Tibial artery (tissue), 4 donors: ENCODE measurements at regions of chr12 and their contacts with region 1.

Region 1: GRCh38 chr12:31659087-31659933 is at the start of gene ETFBKMT:
- DNase-seq: peak; percentile 90 to 93
- H3K4me3 ChIP-seq: peak within 1 kb of the TSS; percentile 57
- H3K27ac ChIP-seq: peak within 1 kb of the TSS; percentile 83 to 92
- H3K4me1 ChIP-seq: peaks cover 0 to 6% (median 2%) of the 10 kb centered on the region in 4 donors
- H3K27me3 ChIP-seq: no peaks in the 10 kb centered on the region
- CTCF ChIP-seq: peak; percentile 35 to 52

Region 2: DNA sequence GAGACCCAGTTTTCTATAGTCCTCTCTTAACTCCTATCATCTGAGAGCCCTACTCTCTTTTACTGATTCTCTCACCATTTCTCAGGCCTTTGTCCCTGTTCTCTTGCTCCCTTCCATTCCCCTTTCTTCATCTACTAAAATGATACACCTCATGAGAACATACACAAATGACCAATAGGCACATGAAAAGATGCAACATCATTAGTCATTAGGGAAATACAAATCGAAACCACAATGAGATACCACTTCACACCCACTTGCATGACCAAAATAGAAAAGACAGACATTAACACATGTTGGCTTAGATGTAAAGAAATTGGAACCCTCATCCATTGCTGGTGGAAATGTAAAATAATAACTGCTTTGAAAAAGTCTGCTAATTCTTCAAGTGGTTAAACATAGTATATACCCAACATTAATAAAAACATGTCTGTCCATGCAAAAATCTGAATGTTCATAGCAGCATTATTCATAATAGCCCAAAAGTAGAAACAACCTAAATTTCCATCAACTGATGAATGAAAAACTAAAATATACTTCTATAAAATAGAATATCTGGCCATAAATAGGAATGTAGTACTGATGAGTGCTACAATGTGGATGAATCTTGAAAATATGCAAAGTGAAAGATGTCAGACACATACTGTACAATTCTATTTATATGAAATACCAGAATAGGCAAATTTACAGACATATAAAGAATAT is 134.4 kb before region 1 on chr12:
- intact Hi-C with region 1: no loop called
- DNase-seq: no peak
- H3K4me3 ChIP-seq: no peak overlapping the region
- H3K27ac ChIP-seq: no peak overlapping the region
- H3K4me1 ChIP-seq: peaks cover 0 to 22% (median 2%) of the 10 kb centered on the region in 4 donors
- H3K27me3 ChIP-seq: no peaks in the 10 kb centered on the region
- CTCF ChIP-seq: no peak

Region 3: GRCh38 chr12:31728917-31729640 is 69.8 kb after region 1 on chr12 and contains the start of gene AMN1:
- intact Hi-C with region 1: loop called (anchors 10 kb)
- DNase-seq: peak; percentile 100
- H3K4me3 ChIP-seq: peak within 1 kb of the TSS; percentile 63 to 66
- H3K27ac ChIP-seq: peak within 1 kb of the TSS; percentile 92 to 95
- H3K4me1 ChIP-seq: peaks cover 9 to 60% (median 29%) of the 10 kb centered on the region in 4 donors
- H3K27me3 ChIP-seq: no peaks in the 10 kb centered on the region
- CTCF ChIP-seq: peak; percentile 6 to 35

Region 4: DNA sequence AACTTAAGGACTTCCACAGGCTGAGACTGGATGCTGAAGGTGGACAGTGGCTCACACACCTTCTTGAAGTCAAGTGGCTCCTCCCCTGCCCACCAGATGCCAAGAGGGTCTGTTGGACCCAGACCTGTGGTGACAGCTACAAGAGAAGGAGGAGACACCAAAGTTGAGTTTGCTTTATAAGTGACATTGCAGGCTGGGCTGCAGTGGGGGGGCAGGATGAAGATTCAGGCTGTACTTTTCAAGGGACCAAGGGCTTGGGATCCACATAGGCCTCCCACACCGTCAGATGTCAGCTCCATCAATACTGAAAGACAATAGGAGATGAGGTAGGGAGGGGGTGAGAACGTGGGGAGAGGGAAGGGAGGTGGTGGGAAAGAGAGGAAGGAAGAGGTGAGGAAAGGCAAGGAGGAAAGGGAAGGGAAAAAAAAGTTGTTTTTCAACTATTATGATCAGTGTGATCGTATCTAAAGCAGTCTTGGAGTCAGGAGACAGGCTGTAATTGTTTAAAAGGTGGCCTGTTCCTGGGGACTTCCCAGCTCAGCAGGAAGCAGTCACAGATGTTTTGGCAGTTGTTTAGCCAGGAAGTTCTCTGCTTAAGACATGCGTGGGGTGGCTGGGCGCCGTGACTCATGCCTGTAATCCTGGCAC is 215.8 kb after region 1 on chr12:
- intact Hi-C with region 1: no loop called
- DNase-seq: peak in 1 of 2 donors; percentile 54
- H3K4me3 ChIP-seq: no peak overlapping the region
- H3K27ac ChIP-seq: no peak overlapping the region
- H3K4me1 ChIP-seq: no peaks in the 10 kb centered on the region
- H3K27me3 ChIP-seq: no peaks in the 10 kb centered on the region
- CTCF ChIP-seq: no peak

Region 5: GRCh38 chr12:31959161-31959700 is 299.9 kb after region 1 on chr12 and contains the start of gene RESF1:
- intact Hi-C with region 1: loop called (anchors 5 kb)
- DNase-seq: peak; percentile 90 to 93
- H3K4me3 ChIP-seq: peak within 1 kb of the TSS; percentile 61 to 74
- H3K27ac ChIP-seq: peak within 1 kb of the TSS; percentile 83 to 91
- H3K4me1 ChIP-seq: peaks cover 0 to 36% (median 25%) of the 10 kb centered on the region in 4 donors
- H3K27me3 ChIP-seq: no peaks in the 10 kb centered on the region
- CTCF ChIP-seq: no peak

Region 6: GRCh38 chr12:32302218-32303173 is 643.2 kb after region 1 on chr12:
- intact Hi-C with region 1: loop called (anchors 10 kb)
- DNase-seq: no peak
- H3K4me3 ChIP-seq: no peak overlapping the region
- H3K27ac ChIP-seq: no peak overlapping the region
- H3K4me1 ChIP-seq: no peaks in the 10 kb centered on the region
- H3K27me3 ChIP-seq: no peaks in the 10 kb centered on the region
- CTCF ChIP-seq: no peak